Activated T-helper 2 cell treated with anti-CD3 and anti-CD28 coated beads, Interferon-gamma antibody, Interleukin-2, Interleukin-4, amounts not matched to agents 10 μg/mL and 5 μg/mL and 100 μg/mL, durations not matched to agents 14 hours and 24 hours and 36 hours (primary cell): ENCODE measurements at regions of chr2 and their contacts with region 1.

Region 1: DNA sequence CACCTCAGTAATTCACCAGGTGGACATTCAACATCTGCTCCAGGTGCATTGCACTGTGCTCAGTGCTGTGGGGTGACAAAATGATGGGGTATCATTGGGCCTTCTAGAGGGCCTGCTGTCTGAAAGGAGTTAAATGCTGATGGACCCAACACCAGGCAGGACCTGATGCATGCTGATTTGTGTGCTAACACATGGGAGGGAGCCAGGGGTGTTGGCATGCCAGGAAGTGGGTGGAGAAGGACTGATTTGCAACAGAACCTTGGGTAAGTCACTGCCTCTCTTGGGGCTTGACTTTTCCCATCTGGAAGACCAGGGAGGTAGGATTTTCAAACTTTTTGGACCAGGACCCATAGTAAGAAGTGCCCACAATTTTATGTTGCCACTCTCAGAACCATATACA is 57.9 kb upstream of the CXCR4 start:
- DNase-seq: no peak
- H3K4me3 Mint-ChIP-seq: no peak overlapping the region
- H3K27ac Mint-ChIP-seq: no peak overlapping the region
- H3K4me1 Mint-ChIP-seq: peaks cover 10% of the 10 kb centered on the region
- H3K27me3 Mint-ChIP-seq: no peaks in the 10 kb centered on the region

Region 2: DNA sequence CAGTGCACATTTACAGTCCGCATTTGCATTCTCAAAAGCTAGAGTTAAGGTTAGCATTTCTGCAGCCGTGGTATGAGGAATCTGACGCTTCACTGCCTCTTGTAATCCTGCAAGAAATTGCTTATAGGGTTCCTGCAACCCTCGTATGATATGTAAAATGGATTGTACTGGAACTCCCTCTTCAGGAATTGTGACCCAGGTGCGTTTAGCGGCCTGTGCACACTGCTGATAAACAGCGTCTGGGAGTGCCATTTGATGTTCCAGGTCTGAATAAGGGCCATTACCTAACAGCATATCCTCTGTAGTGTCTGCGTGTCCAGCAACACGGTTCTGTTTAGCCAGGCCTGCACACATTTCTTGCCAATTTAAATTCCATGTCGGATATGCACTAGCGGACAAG is 100.4 kb before region 1 on chr2:
- intact Hi-C with region 1: no loop called
- DNase-seq: no peak
- H3K4me3 Mint-ChIP-seq: no peak overlapping the region
- H3K27ac Mint-ChIP-seq: no peak overlapping the region
- H3K4me1 Mint-ChIP-seq: peaks cover 11% of the 10 kb centered on the region
- H3K27me3 Mint-ChIP-seq: no peaks in the 10 kb centered on the region

Region 3: GRCh38 chr2:136225950-136226835 is 50.3 kb after region 1 on chr2:
- intact Hi-C with region 1: loop called (anchors 2 kb)
- DNase-seq: no peak
- H3K4me3 Mint-ChIP-seq: no peak overlapping the region
- H3K27ac Mint-ChIP-seq: peak overlapping the region; percentile 26
- H3K4me1 Mint-ChIP-seq: peaks cover 19% of the 10 kb centered on the region
- H3K27me3 Mint-ChIP-seq: peaks cover 12% of the 10 kb centered on the region

Region 4: DNA sequence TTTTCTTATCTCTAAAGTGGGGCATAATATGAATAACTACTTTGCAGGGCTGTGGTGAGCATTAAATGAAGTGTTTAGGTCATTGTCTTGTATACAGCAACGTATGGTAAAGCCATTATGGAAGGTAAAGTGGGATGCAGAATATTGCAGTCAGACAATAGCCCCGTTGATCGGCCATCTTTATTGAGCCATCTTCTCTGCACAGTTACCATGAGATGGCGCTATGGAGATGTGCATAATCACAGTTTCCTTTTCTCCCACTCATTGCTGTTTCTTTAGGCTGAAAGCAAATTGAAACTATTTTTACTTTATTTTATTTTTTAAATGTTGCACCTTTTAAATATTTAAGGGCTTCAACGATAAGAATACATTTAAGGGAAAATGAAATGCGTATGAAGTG is 698.4 kb after region 1 on chr2:
- intact Hi-C with region 1: no loop called
- DNase-seq: no peak
- H3K4me3 Mint-ChIP-seq: no peak overlapping the region
- H3K27ac Mint-ChIP-seq: no peak overlapping the region
- H3K4me1 Mint-ChIP-seq: no peaks in the 10 kb centered on the region
- H3K27me3 Mint-ChIP-seq: no peaks in the 10 kb centered on the region